Heart left ventricle (tissue), 16 donors: ENCODE measurements at regions of chr12 and their contacts with region 1.

Region 1: GRCh38 chr12:121697098-121697698 is 15.4 kb upstream of the TMEM120B start:
- DNase-seq: no peak
- ATAC-seq: no peak
- H3K4me3 ChIP-seq: no peak overlapping the region
- H3K27ac ChIP-seq: no peak overlapping the region
- H3K4me1 ChIP-seq: peaks cover 0 to 5% (median 0%) of the 10 kb centered on the region in 12 donors
- H3K27me3 ChIP-seq: no peaks in the 10 kb centered on the region
- CTCF ChIP-seq: peak; percentile 41 to 70 (median 60)
- POLR2A ChIP-seq: no peak

Region 2: DNA sequence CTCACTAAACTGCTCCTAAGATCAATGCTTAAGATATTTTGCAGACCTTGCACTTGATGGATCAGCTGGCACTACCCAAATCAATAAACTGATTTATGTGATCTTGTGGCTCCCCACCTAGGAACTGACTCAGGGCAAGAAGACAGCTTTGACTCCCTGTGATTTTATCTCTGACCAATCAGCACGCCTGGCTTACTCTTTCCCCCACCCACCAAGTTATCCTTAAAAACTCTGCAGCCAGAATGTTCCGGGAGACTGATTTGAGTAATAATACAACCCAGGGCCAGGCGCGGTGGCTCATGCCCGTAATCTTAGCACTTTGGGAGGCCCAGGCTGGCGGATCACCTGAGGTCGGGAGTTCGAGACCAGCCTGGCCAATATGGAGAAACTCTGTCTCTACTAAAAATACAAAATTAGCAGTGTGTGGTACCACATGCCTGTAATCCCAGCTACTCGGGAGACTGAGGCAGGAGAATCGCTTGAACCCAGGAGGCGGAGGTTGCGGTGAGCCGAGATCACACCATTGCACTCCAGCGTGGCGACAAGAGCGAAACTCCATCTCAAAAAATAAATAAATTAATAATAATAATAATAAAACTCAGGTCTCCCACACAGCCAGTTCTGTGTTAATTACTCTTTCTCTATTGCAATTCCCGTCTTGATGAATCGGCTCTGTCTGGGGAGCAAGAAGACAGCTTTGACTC is 39.7 kb before region 1 on chr12:
- intact Hi-C with region 1: no loop called
- DNase-seq: no peak
- ATAC-seq: no peak
- H3K4me3 ChIP-seq: no peak overlapping the region
- H3K27ac ChIP-seq: peak overlapping the region in 3 of 12 donors; percentile 69 to 93 (median 91)
- H3K4me1 ChIP-seq: peaks cover 0 to 22% (median 5%) of the 10 kb centered on the region in 12 donors
- H3K27me3 ChIP-seq: no peaks in the 10 kb centered on the region
- CTCF ChIP-seq: no peak
- POLR2A ChIP-seq: no peak

Region 3: DNA sequence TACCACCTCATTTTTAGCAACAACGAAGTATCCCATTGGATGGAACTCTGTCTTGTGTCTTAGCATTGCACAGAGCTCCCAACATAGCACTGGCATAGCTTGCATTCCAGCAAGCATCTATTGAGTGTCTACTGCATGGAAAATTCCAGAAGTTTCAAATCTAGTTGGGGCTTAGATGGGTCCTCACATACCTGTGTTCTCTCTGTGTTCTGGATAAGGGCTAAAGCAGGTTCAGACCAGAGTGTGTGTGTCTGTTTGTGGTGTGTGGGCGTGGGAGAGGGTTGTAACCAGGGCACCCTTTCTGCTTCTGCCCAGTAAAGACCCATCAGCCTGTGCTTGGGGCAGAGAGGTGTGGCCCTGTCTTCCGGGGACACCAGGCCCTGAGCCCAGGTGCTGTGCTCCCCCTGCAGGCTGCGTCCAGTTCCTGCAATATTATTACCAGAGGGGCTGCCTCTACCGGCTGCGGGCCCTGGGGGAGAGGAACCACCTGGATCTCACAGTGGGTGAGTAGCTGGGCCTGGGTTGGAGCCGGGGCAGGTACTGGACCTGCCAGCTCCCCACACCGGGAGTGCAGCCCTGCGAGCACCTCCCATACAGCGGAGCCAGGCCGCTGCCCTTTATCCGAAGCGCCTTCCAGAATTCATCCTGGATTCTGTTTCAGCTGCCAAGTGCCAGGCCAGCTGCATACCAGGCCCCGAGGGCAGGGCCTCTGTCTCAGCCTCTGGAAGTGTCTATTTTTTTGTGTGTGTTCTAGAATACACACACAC is 76.0 kb after region 1 on chr12:
- intact Hi-C with region 1: loop called (anchors 1 to 5 kb)
- DNase-seq: peak in 4 of 5 donors; percentile 66 to 87 (median 73)
- ATAC-seq: peak; percentile 58 to 72 (median 67)
- H3K4me3 ChIP-seq: peak overlapping the region in 1 of 12 donors; percentile 8
- H3K27ac ChIP-seq: peak overlapping the region in 10 of 12 donors; percentile 28 to 76 (median 68)
- H3K4me1 ChIP-seq: peaks cover 0 to 62% (median 21%) of the 10 kb centered on the region in 12 donors
- H3K27me3 ChIP-seq: no peaks in the 10 kb centered on the region
- CTCF ChIP-seq: peak; percentile 64 to 82 (median 75)
- POLR2A ChIP-seq: no peak

Region 4: DNA sequence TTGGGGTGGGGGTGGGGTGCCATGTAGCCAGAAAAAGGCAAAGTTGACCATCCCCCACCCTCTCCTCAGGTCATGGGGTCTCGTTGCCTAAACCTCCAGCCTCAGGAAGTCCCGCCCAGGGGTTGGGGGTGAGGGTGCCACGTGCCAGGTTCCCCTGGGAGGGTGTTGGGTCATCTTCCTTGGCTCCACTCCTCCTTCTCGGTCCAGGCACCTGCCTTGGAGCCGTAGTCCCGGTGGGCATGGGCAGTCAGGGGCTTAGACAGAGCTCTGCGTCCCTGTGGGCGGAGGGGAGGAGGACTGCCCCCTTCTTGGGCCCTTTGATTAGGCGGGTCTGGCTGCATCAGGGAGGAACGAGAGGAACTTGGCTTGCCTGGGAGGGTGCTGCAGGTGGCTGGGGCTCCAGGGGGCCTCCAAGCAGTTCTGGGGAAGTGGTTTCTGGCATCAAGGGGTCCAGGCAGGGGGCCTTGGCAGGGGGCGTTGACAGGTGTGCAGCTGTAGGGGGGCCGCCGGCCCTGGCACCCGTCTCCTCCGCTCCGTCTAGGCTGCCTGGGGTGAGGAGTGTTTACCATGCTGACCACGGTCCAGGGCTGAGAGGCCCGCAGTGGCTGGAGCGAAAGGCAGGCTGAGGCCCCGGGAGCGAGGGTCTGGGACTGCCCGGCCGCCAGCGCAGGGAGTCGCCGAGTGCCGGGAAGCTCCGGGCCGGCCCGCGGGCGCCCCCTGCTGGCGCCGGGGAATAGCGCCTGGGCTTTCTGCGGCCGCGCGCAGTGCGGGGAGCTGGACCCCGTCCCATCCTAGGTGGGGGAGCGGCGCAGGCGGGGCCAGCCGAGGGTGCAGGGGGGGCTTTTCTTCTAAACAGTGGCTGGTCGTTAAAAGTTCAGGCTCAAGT is 114.5 kb after region 1 on chr12:
- intact Hi-C with region 1: loop called in 1 of 10 experiments (anchors 5 kb)
- DNase-seq: peak; percentile 69 to 88 (median 76)
- ATAC-seq: peak in 3 of 4 donors; percentile 84 to 87 (median 87)
- H3K4me3 ChIP-seq: peak overlapping the region; percentile 20 to 76 (median 58)
- H3K27ac ChIP-seq: peak overlapping the region in 11 of 12 donors; percentile 23 to 82 (median 64)
- H3K4me1 ChIP-seq: peaks cover 3 to 54% (median 41%) of the 10 kb centered on the region in 12 donors
- H3K27me3 ChIP-seq: no peaks in the 10 kb centered on the region
- CTCF ChIP-seq: peak; percentile 97 to 100 (median 100)
- POLR2A ChIP-seq: no peak

Region 5: GRCh38 chr12:121894633-121895032 is 197.4 kb after region 1 on chr12:
- intact Hi-C with region 1: loop called in 6 of 10 experiments (anchors 5 to 10 kb)
- DNase-seq: no peak
- ATAC-seq: no peak
- H3K4me3 ChIP-seq: no peak overlapping the region
- H3K27ac ChIP-seq: no peak overlapping the region
- H3K4me1 ChIP-seq: peaks cover under 1 to 25% (median 13%) of the 10 kb centered on the region in 12 donors
- H3K27me3 ChIP-seq: no peaks in the 10 kb centered on the region
- CTCF ChIP-seq: peak in 1 of 12 donors; percentile 6
- POLR2A ChIP-seq: no peak